MCF 10A (cell line): ENCODE measurements at regions of chr11 and their contacts with region 1.

Region 1: GRCh38 chr11:89175796-89176195 is 1.9 kb upstream of the TYR start:
- DNase-seq: no peak
- H3K4me3 Mint-ChIP-seq: no peak overlapping the region
- H3K27ac Mint-ChIP-seq: no peak overlapping the region
- H3K4me1 Mint-ChIP-seq: no peaks in the 10 kb centered on the region
- H3K27me3 Mint-ChIP-seq: peaks cover 66% of the 10 kb centered on the region
- CTCF ChIP-seq: no peak

Region 2: DNA sequence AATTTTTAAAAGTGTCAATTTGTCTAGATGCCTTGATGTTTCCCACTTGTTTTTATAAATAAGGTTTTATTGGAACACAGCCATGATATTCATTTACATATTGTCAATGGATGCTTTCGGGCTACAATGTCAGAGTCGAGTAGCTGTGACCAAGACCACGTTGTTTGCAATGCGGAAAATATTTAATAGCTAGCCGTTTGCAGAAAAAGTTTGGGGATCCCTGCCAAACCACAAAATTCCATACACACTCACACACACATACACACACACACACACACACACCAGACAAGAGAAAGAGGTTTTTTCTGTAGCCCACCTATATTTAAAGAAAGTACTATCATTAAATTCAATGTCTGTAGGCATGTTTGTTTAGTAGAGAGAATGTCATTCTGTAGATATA is 60.2 kb after region 1 on chr11:
- CTCF ChIA-PET with region 1: no interaction called
- POLR2A ChIA-PET with region 1: no interaction called
- intact Hi-C with region 1: loop called (anchors 10 kb)
- DNase-seq: no peak
- H3K4me3 Mint-ChIP-seq: no peak overlapping the region
- H3K27ac Mint-ChIP-seq: no peak overlapping the region
- H3K4me1 Mint-ChIP-seq: peaks cover 5% of the 10 kb centered on the region
- H3K27me3 Mint-ChIP-seq: peaks cover 90% of the 10 kb centered on the region
- CTCF ChIP-seq: no peak